ENCODE measurements at regions of chr21 and their contacts with region 1.

Region 1: DNA sequence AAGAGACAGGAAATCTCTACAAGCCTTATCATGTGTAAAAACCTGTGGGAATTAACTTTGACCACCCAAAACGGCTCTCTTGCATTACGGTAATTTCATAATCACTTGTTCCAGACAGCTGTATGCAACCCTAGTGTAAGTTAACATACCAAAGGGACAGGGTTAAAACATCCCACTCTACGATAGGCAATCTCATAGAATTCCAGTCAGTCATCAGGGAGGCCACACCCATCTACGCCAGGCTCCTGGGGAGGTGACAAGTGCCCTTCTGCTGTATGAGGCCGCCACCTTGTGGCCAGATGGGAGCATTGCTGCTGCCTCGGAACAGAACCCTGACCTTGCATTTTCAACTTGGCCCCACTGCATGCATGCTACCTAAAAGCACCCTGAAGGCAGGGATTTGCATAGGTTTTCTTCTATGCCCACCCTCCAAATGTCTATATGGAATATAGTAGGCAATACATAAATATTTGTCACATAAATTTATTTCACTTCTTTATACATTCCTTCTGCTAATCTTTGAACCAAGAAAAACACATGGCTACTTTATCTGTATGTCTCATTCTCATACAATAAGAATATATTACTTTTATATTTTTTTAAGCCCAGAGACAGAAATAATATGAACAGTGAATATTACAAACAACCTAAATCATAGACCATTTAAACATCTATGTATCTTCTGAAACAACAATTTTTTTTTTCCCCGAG is 12.6 kb downstream of the HSF2BP start:
- DNase-seq: peak; percentile 66 to 91 (median 84)
- ATAC-seq: peak; percentile 99
- H3K4me3 ChIP-seq: no peak overlapping the region
- H3K4me3 Mint-ChIP-seq: no peak overlapping the region
- H3K27ac ChIP-seq: no peak overlapping the region
- H3K27ac Mint-ChIP-seq: peak overlapping the region; percentile 53
- H3K4me1 ChIP-seq: peaks cover 17% of the 10 kb centered on the region
- H3K4me1 Mint-ChIP-seq: peaks cover 15% of the 10 kb centered on the region
- H3K27me3 ChIP-seq: peaks cover 0 to 4% of the 10 kb centered on the region in 2 experiments
- H3K27me3 Mint-ChIP-seq: peaks cover 4% of the 10 kb centered on the region
- CTCF ChIP-seq: peak; percentile 98

Region 2: GRCh38 chr21:42923541-42924432 is 722.9 kb before region 1 on chr21:
- CTCF ChIA-PET with region 1: no interaction called
- POLR2A ChIA-PET with region 1: no interaction called
- intact Hi-C with region 1: loop called in 1 of 2 experiments (anchors 1 kb)
- DNase-seq: peak; percentile 8 to 83 (median 63)
- ATAC-seq: peak; percentile 97
- H3K4me3 ChIP-seq: no peak overlapping the region
- H3K4me3 Mint-ChIP-seq: no peak overlapping the region
- H3K27ac ChIP-seq: no peak overlapping the region
- H3K27ac Mint-ChIP-seq: no peak overlapping the region
- H3K4me1 ChIP-seq: peaks cover 9% of the 10 kb centered on the region
- H3K4me1 Mint-ChIP-seq: peaks cover 13% of the 10 kb centered on the region
- H3K27me3 ChIP-seq: no peaks in the 10 kb centered on the region
- H3K27me3 Mint-ChIP-seq: no peaks in the 10 kb centered on the region
- CTCF ChIP-seq: peak; percentile 72

Region 3: DNA sequence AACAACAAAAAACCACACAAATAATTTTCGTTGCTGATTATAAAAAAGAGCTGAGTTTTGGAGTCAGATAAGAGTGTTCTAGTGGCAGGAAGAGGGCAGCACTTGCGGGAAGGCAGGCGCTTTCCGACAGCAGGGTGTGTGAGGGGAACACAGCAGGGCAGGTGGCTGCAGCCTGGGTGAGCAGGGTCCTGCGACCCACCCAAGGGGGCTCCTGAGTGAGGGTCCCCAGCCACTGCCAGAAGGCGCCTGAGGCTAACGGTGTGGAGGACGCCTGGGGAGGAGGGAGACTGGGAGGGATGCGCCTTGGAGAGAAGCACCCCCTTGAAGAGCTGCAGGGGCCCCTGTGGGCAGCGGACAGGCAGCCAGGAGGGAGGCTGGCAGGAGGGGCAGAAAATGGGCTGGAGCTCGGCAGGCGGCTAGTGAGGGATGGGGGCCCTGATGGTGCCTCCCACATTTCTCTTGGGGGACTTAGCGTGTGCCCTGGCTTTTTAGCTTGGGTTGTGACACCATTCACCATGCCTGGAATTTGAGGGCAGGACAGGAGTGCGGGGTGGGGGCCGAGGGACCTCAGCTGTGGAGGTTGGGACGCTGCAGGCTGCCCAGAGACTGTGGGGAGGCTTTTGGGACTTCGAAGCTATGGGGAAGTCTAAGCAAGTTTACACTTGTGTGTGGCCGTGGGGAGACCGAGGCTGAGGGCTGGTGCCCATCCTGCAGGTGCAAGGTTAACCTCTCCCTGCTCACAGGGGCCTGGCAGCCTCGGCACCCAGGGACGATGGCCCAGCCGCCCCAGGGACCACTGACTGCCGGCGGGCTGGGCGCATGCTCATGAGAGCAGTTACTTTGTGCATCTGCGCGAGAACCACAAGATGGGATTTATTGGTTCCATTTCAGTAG is 331.2 kb before region 1 on chr21:
- CTCF ChIA-PET with region 1: interaction called, 5 read pairs
- POLR2A ChIA-PET with region 1: no interaction called
- intact Hi-C with region 1: loop called in 1 of 2 experiments (anchors 1 kb)
- DNase-seq: peak in 7 of 9 experiments; percentile 14 to 60 (median 40)
- ATAC-seq: peak; percentile 82
- H3K4me3 ChIP-seq: no peak overlapping the region
- H3K4me3 Mint-ChIP-seq: no peak overlapping the region
- H3K27ac ChIP-seq: no peak overlapping the region
- H3K27ac Mint-ChIP-seq: peak overlapping the region; percentile 77
- H3K4me1 ChIP-seq: no peaks in the 10 kb centered on the region
- H3K4me1 Mint-ChIP-seq: peaks cover 2% of the 10 kb centered on the region
- H3K27me3 ChIP-seq: no peaks in the 10 kb centered on the region
- H3K27me3 Mint-ChIP-seq: peaks cover 5% of the 10 kb centered on the region
- CTCF ChIP-seq: no peak

Region 4: DNA sequence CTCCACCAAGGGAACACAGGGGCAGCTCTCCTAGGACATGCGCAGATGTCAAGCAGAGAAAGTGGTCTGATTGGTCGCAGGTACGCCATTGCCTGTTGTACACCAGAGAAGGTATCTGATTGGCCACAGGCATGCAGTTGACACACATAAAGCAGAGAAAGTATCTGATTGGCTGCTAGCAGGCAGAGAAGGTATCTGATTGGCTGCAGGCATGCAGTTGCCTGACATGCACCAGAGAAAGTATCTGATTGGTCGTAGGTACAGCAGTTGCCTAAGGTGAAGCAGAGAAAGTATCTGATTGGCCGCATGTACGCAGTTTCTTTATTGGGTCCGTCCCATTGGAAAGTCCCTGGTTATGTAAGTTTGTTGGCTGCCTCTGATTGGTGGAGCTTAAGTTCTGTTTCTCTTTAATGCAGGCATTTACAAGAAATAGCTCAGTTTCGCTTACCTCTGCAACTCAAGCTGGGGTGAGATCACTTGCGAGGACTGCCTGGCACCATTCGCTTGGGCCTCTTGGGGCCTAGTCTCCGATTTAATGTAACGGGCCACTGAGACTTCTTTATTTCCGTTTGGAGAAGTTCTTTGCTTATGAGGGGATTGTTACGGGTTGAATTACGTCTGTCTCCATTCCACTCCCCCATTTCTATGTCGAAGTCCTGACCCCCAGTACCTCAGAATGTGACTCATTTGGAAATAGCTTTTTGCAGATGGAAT is 294.0 kb before region 1 on chr21:
- CTCF ChIA-PET with region 1: no interaction called
- POLR2A ChIA-PET with region 1: no interaction called
- intact Hi-C with region 1: loop called in 1 of 2 experiments (anchors 10 kb)
- DNase-seq: peak in 2 of 9 experiments; percentile 34 to 59
- ATAC-seq: peak; percentile 54
- H3K4me3 ChIP-seq: no peak overlapping the region
- H3K4me3 Mint-ChIP-seq: no peak overlapping the region
- H3K27ac ChIP-seq: no peak overlapping the region
- H3K27ac Mint-ChIP-seq: no peak overlapping the region
- H3K4me1 ChIP-seq: no peaks in the 10 kb centered on the region
- H3K4me1 Mint-ChIP-seq: no peaks in the 10 kb centered on the region
- H3K27me3 ChIP-seq: no peaks in the 10 kb centered on the region
- H3K27me3 Mint-ChIP-seq: no peaks in the 10 kb centered on the region
- CTCF ChIP-seq: no peak

Region 5: GRCh38 chr21:43585924-43586424 is 60.7 kb before region 1 on chr21:
- CTCF ChIA-PET with region 1: no interaction called
- POLR2A ChIA-PET with region 1: no interaction called
- intact Hi-C with region 1: no loop called
- DNase-seq: no peak
- ATAC-seq: no peak
- H3K4me3 ChIP-seq: no peak overlapping the region
- H3K4me3 Mint-ChIP-seq: no peak overlapping the region
- H3K27ac ChIP-seq: no peak overlapping the region
- H3K27ac Mint-ChIP-seq: no peak overlapping the region
- H3K4me1 ChIP-seq: no peaks in the 10 kb centered on the region
- H3K4me1 Mint-ChIP-seq: no peaks in the 10 kb centered on the region
- H3K27me3 ChIP-seq: no peaks in the 10 kb centered on the region
- H3K27me3 Mint-ChIP-seq: no peaks in the 10 kb centered on the region
- CTCF ChIP-seq: no peak

Region 6: DNA sequence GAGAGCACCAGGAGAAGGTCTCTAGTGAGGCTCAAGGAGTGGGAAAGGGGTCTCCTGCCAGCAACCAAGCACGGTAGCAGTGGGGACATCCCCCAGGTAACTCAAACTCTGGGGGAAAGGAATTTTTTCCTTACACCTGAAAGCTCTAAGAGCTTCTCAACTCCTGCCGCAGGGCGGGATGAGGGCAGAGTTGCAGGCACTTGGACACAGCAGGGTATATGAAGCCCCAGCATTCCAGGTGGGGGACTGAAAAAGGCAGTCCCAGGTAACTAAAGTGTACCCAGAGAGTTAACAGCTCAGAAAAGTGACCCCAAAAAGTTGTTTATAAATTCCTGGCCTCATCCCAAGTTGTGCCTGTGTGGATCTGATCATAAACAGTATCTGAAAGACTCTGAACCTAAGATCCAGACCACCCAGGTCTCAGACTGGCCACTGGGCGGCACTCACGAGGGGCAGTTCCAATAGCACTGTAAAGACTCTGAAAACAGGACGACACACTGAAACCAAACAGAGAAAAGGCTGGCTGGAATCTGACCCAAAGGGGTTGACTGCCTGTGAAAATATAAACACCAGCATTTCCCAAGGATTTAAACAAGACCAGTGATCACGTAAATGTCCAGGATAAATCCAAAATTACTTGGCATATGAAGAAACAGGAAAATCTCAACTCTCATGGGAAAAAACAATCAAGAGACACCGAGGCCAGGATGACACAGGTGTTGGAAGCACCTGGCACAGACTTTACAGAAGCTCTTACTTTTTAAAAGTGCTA is 34.9 kb before region 1 on chr21:
- CTCF ChIA-PET with region 1: no interaction called
- POLR2A ChIA-PET with region 1: no interaction called
- intact Hi-C with region 1: no loop called
- DNase-seq: peak in 2 of 9 experiments; percentile 7 to 21
- ATAC-seq: no peak
- H3K4me3 ChIP-seq: no peak overlapping the region
- H3K4me3 Mint-ChIP-seq: no peak overlapping the region
- H3K27ac ChIP-seq: no peak overlapping the region
- H3K27ac Mint-ChIP-seq: no peak overlapping the region
- H3K4me1 ChIP-seq: no peaks in the 10 kb centered on the region
- H3K4me1 Mint-ChIP-seq: no peaks in the 10 kb centered on the region
- H3K27me3 ChIP-seq: no peaks in the 10 kb centered on the region
- H3K27me3 Mint-ChIP-seq: no peaks in the 10 kb centered on the region
- CTCF ChIP-seq: no peak

Region 7: GRCh38 chr21:43659136-43660000 is 12.7 kb after region 1 on chr21 and contains the starts of genes HSF2BP and RRP1B:
- CTCF ChIA-PET with region 1: interaction called, 19 read pairs
- POLR2A ChIA-PET with region 1: interaction called, 4 read pairs
- intact Hi-C with region 1: loop called in 1 of 2 experiments (anchors 1 kb)
- DNase-seq: peak; percentile 65 to 91 (median 73)
- ATAC-seq: peak; percentile 82
- H3K4me3 ChIP-seq: peak within 1 kb of the TSS; percentile 81 to 84
- H3K4me3 Mint-ChIP-seq: peak within 1 kb of the TSS; percentile 93
- H3K27ac ChIP-seq: peak within 1 kb of the TSS; percentile 83 to 86
- H3K27ac Mint-ChIP-seq: peak within 1 kb of the TSS; percentile 92
- H3K4me1 ChIP-seq: peaks cover 31% of the 10 kb centered on the region
- H3K4me1 Mint-ChIP-seq: peaks cover 46% of the 10 kb centered on the region
- H3K27me3 ChIP-seq: no peaks in the 10 kb centered on the region
- H3K27me3 Mint-ChIP-seq: no peaks in the 10 kb centered on the region
- CTCF ChIP-seq: no peak
- total RNA-seq, gene HSF2BP: 0.64 to 1.3 TPM
- total RNA-seq, gene RRP1B: 24.3 to 26.1 TPM

Measured in CD8-positive, alpha-beta T cell (primary cell).